ENCODE measurements at regions of chr20 and their contacts with region 1.

Region 1: DNA sequence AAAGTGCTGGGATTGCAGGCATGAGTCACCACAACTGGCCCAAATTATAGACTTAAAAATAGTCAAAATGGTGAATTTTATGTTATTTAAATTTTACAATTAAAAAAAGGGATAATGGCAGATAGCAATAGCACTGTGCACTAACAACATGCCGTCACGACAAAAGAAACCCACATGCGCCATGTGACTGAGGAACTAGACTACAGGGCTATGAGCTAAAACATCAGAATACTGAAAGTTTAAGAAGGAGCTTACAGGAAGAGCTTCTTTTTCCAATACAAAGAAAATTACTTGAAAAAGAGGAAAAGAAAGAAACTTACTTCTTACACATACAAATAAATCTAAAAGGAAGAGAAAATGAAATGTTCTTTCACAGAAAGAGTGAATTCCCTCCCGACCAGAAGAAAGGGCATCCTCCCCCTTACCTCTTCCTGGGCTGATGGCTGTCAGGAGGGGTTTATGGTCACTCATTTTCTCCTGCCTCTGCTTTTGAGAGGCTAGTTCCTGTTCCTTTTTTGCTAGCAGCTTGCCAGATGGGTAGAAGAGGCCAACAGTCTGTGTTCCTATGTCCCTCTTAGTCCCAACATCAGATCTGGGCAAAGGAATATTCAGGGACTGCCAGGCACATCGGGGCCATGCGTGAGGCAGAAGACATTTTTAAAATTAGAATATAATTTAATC is 54.5 kb downstream of the DZANK1 start:
- DNase-seq: no peak
- H3K4me3 ChIP-seq: peak overlapping the region; percentile 20
- H3K4me3 Mint-ChIP-seq: peak overlapping the region; percentile 70
- H3K27ac Mint-ChIP-seq: peak overlapping the region; percentile 84
- H3K4me1 ChIP-seq: no peaks in the 10 kb centered on the region
- H3K4me1 Mint-ChIP-seq: peaks cover 8% of the 10 kb centered on the region
- H3K27me3 ChIP-seq: no peaks in the 10 kb centered on the region
- H3K27me3 Mint-ChIP-seq: no peaks in the 10 kb centered on the region
- CTCF ChIP-seq: no peak

Region 2: DNA sequence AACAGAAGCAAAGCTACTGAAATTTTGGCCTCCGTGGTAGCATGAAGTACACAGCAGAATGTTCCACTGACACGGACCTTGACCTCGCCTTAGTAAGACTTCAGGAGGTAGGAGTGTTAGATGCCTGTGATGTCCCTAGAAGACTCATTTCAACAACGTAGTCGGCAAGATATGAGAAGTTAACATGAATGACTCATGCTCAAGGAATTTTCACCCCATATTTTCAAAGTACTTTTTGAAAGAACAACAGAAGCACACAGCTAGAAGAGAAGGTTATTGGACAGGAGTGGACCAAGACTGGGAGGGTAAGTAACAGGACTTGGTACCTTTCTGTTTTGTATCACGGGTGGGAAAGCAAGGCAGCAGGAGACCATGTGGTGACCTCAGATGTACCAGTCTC is 23.5 kb before region 1 on chr20:
- CTCF ChIA-PET with region 1: no interaction called
- POLR2A ChIA-PET with region 1: no interaction called
- intact Hi-C with region 1: no loop called
- DNase-seq: peak; percentile 75
- H3K4me3 ChIP-seq: no peak overlapping the region
- H3K4me3 Mint-ChIP-seq: peak overlapping the region; percentile 66
- H3K27ac Mint-ChIP-seq: peak overlapping the region; percentile 89
- H3K4me1 ChIP-seq: peaks cover 35% of the 10 kb centered on the region
- H3K4me1 Mint-ChIP-seq: peaks cover 20% of the 10 kb centered on the region
- H3K27me3 ChIP-seq: no peaks in the 10 kb centered on the region
- H3K27me3 Mint-ChIP-seq: no peaks in the 10 kb centered on the region
- CTCF ChIP-seq: no peak

Region 3: DNA sequence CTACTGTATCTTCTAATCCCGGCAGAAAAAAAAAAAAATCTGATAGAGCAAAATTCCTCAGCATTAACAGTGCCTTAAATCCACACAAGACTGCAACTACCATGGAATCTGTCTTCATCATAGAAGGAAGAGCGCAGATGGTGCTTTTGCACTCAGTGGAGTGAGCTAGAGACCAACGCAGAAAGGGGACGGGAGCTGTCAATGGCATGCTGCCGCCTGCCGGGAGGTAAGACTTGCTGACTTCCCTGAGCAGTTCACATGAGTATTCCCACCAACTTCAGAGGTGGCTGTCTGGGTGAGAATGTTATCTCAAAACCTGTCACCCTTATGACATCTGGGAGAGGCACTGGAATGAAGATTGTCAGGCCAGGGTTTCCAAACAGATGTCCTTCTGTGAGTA is 18.8 kb after region 1 on chr20:
- CTCF ChIA-PET with region 1: interaction called, 5 read pairs
- POLR2A ChIA-PET with region 1: no interaction called
- intact Hi-C with region 1: loop called (anchors 1 kb)
- DNase-seq: peak; percentile 70 to 81
- H3K4me3 ChIP-seq: no peak overlapping the region
- H3K4me3 Mint-ChIP-seq: no peak overlapping the region
- H3K27ac Mint-ChIP-seq: no peak overlapping the region
- H3K4me1 ChIP-seq: peaks cover 9% of the 10 kb centered on the region
- H3K4me1 Mint-ChIP-seq: no peaks in the 10 kb centered on the region
- H3K27me3 ChIP-seq: no peaks in the 10 kb centered on the region
- H3K27me3 Mint-ChIP-seq: no peaks in the 10 kb centered on the region
- CTCF ChIP-seq: peak in 1 of 2 experiments; percentile 76

Region 4: GRCh38 chr20:18466894-18467730 is 54.8 kb after region 1 on chr20 and contains the starts of genes DZANK1 and POLR3F:
- CTCF ChIA-PET with region 1: no interaction called
- POLR2A ChIA-PET with region 1: no interaction called
- intact Hi-C with region 1: loop called (anchors 2 kb)
- DNase-seq: peak; percentile 98
- H3K4me3 ChIP-seq: peak within 1 kb of the TSS; percentile 82
- H3K4me3 Mint-ChIP-seq: peak within 1 kb of the TSS; percentile 98
- H3K27ac Mint-ChIP-seq: peak within 1 kb of the TSS; percentile 100
- H3K4me1 ChIP-seq: peaks cover 6% of the 10 kb centered on the region; the same call in 1 of the 2 replicates
- H3K4me1 Mint-ChIP-seq: peaks cover 17% of the 10 kb centered on the region
- H3K27me3 ChIP-seq: no peaks in the 10 kb centered on the region
- H3K27me3 Mint-ChIP-seq: no peaks in the 10 kb centered on the region
- CTCF ChIP-seq: no peak
- total RNA-seq, gene DZANK1: 8.6 and 9.6 TPM in 2 replicates
- total RNA-seq, gene POLR3F: 13.7 and 15.7 TPM in 2 replicates

Region 5: GRCh38 chr20:18513208-18513607 is 100.8 kb after region 1 on chr20:
- CTCF ChIA-PET with region 1: no interaction called
- POLR2A ChIA-PET with region 1: no interaction called
- intact Hi-C with region 1: no loop called
- DNase-seq: no peak
- H3K4me3 ChIP-seq: no peak overlapping the region
- H3K4me3 Mint-ChIP-seq: no peak overlapping the region
- H3K27ac Mint-ChIP-seq: no peak overlapping the region
- H3K4me1 ChIP-seq: no peaks in the 10 kb centered on the region
- H3K4me1 Mint-ChIP-seq: no peaks in the 10 kb centered on the region
- H3K27me3 ChIP-seq: no peaks in the 10 kb centered on the region
- H3K27me3 Mint-ChIP-seq: no peaks in the 10 kb centered on the region
- CTCF ChIP-seq: no peak

Region 6: GRCh38 chr20:18537651-18538050 is 125.3 kb after region 1 on chr20:
- CTCF ChIA-PET with region 1: no interaction called
- POLR2A ChIA-PET with region 1: no interaction called
- intact Hi-C with region 1: no loop called
- DNase-seq: no peak
- H3K4me3 ChIP-seq: no peak overlapping the region
- H3K4me3 Mint-ChIP-seq: no peak overlapping the region
- H3K27ac Mint-ChIP-seq: no peak overlapping the region
- H3K4me1 ChIP-seq: no peaks in the 10 kb centered on the region
- H3K4me1 Mint-ChIP-seq: no peaks in the 10 kb centered on the region
- H3K27me3 ChIP-seq: no peaks in the 10 kb centered on the region
- H3K27me3 Mint-ChIP-seq: no peaks in the 10 kb centered on the region
- CTCF ChIP-seq: no peak

Region 7: GRCh38 chr20:18566892-18567742 is 154.8 kb after region 1 on chr20 and contains the start of gene SMIM26:
- CTCF ChIA-PET with region 1: no interaction called
- POLR2A ChIA-PET with region 1: no interaction called
- intact Hi-C with region 1: loop called (anchors 10 kb)
- DNase-seq: peak; percentile 95
- H3K4me3 ChIP-seq: peak within 1 kb of the TSS; percentile 59
- H3K4me3 Mint-ChIP-seq: peak within 1 kb of the TSS; percentile 84
- H3K27ac Mint-ChIP-seq: peak within 1 kb of the TSS; percentile 74
- H3K4me1 ChIP-seq: no peaks in the 10 kb centered on the region
- H3K4me1 Mint-ChIP-seq: no peaks in the 10 kb centered on the region
- H3K27me3 ChIP-seq: no peaks in the 10 kb centered on the region
- H3K27me3 Mint-ChIP-seq: no peaks in the 10 kb centered on the region
- CTCF ChIP-seq: no peak
- total RNA-seq, gene SMIM26: 96.2 and 99.3 TPM in 2 replicates

Region 8: DNA sequence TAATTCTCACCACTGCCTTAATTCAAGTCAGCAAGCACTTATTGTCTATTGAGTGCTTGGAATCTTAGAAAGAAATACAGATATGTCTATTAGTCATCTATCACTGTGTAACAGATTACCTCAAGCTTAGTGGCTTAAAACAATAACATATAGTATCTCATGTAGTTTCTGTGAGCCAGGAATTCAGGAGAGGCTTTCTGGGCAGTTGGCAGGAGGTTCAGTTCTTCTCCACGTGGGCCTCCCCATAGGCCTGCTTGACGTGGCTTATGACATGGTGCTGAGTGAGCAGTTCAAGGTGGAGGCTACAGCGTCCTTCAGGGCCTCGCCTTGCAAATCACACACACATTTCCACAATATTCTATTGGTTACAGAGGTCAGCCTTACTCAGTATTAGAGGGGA is 245.2 kb after region 1 on chr20:
- CTCF ChIA-PET with region 1: no interaction called
- POLR2A ChIA-PET with region 1: no interaction called
- intact Hi-C with region 1: no loop called
- DNase-seq: no peak
- H3K4me3 ChIP-seq: no peak overlapping the region
- H3K4me3 Mint-ChIP-seq: no peak overlapping the region
- H3K27ac Mint-ChIP-seq: no peak overlapping the region
- H3K4me1 ChIP-seq: peaks cover 6% of the 10 kb centered on the region; the same call in 1 of the 2 replicates
- H3K4me1 Mint-ChIP-seq: no peaks in the 10 kb centered on the region
- H3K27me3 ChIP-seq: no peaks in the 10 kb centered on the region
- H3K27me3 Mint-ChIP-seq: no peaks in the 10 kb centered on the region
- CTCF ChIP-seq: no peak

Region 9: GRCh38 chr20:18793625-18794427 is 381.5 kb after region 1 on chr20:
- CTCF ChIA-PET with region 1: no interaction called
- POLR2A ChIA-PET with region 1: no interaction called
- intact Hi-C with region 1: loop called (anchors 1 kb)
- DNase-seq: peak; percentile 87 to 92
- H3K4me3 ChIP-seq: peak overlapping the region; percentile 52
- H3K4me3 Mint-ChIP-seq: peak overlapping the region; percentile 90
- H3K27ac Mint-ChIP-seq: peak overlapping the region; percentile 89
- H3K4me1 ChIP-seq: no peaks in the 10 kb centered on the region
- H3K4me1 Mint-ChIP-seq: peaks cover under 1% of the 10 kb centered on the region
- H3K27me3 ChIP-seq: no peaks in the 10 kb centered on the region
- H3K27me3 Mint-ChIP-seq: peaks cover 6% of the 10 kb centered on the region
- CTCF ChIP-seq: peak in 1 of 2 experiments; percentile 56

Measured in Caco-2 (cell line).